Activated T-helper 2 cell treated with anti-CD3 and anti-CD28 coated beads, Interferon-gamma antibody, Interleukin-2, Interleukin-4, amounts not matched to agents 10 μg/mL and 5 μg/mL and 100 μg/mL, durations not matched to agents 14 hours and 24 hours and 36 hours (primary cell): ENCODE measurements at regions of chr3 and their contacts with region 1.

Region 1: GRCh38 chr3:185937689-185938463 is at the start of gene TRA2B:
- DNase-seq: peak; percentile 98
- H3K4me3 Mint-ChIP-seq: peak within 1 kb of the TSS; percentile 98
- H3K27ac Mint-ChIP-seq: peak within 1 kb of the TSS; percentile 100
- H3K4me1 Mint-ChIP-seq: peaks cover 34% of the 10 kb centered on the region
- H3K27me3 Mint-ChIP-seq: peaks cover 13% of the 10 kb centered on the region
- total RNA-seq, gene TRA2B: 277 and 282 TPM in 2 replicates

Region 2: DNA sequence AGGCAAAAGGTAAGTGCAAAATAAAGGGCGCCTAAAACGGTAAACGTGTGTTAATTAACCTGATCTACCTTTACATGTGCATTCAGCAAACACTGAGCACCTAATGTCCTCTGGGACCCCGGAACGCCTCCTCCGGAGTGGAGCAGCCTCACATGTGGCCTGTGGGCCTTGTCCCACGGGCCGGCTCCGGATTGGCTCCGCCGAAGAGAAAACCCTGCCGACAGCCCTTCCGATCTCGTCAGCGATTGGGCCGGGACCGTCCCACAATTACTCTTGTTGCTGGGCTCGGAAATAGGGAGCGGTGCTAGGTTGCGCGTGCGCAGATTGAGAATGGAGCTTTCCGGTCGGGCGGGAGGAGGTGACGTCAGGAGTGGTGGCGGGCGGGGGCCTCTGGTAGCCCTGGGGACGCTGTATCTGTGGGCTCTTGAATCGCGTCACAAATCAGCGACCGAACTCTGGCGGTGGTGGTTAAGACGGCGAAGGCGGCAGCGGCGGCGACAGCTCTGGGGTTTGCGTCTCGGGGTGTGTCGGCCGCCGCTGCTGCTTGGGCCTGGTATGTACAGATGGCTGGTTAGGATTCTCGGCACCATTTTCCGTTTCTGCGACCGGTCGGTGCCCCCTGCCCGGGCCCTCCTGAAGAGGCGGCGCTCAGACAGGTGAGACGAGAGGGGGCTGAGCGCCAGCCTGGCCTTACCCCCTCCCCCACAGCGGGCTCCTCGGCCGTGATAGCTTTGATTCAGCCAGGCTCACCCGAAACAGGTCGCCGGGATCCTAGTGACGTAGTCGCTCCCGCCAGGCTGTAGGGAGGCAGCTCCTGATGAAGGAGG is 351.8 kb before region 1 on chr3 and contains the start of gene SENP2:
- intact Hi-C with region 1: loop called (anchors 5 kb)
- DNase-seq: peak; percentile 100
- H3K4me3 Mint-ChIP-seq: peak within 1 kb of the TSS; percentile 82
- H3K27ac Mint-ChIP-seq: peak within 1 kb of the TSS; percentile 87
- H3K4me1 Mint-ChIP-seq: peaks cover 17% of the 10 kb centered on the region
- H3K27me3 Mint-ChIP-seq: no peaks in the 10 kb centered on the region
- total RNA-seq, gene SENP2: 31.5 and 34.2 TPM in 2 replicates

Region 3: DNA sequence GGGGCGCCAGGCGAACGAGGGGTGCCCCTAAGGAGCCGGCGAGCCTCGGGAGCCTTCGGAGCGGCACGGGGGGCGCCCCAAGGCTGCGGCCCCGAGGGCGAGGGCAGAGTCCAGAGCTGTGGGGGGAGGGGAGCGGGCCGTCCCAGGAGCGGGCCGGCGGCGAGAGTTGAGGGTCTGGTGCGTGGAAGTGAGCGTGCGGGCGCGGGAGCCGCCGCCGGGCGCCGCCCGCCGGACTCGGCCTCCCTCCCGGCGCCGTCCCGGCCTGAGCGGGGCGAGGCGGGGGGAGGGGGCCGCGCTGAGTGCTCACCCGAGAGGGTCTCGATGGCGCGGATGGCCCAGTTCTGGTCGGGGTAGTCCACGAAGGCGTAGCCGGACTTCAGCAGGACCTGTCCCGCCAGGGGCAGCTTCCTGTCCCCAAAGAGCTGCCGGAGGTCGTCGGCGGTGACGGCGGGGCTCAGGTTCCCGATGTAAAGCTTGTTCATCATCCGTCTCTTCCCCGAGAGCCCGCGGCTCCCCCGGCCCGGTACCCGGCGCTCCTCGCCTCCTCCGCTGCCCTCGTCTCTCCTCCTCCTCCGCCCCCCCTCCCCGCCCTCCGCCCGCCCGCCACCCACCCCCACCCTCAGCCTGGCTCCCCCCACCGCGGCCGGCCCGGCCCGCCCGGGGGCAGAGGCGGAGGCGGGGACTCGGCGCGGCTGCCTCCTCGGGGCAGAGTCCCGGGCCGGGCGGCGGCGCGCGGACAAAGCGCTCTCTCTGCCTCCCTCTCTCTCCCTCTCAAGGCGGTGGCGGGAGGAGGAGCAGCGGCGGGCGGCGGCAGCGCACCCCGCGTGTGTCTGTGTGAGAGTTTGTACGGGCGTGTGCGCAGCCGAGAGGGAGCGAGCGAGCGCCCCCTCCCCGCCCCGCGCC is 113.1 kb before region 1 on chr3 and contains the start of gene IGF2BP2:
- intact Hi-C with region 1: loop called (anchors 10 kb)
- DNase-seq: peak; percentile 46
- H3K4me3 Mint-ChIP-seq: peak within 1 kb of the TSS; percentile 75
- H3K27ac Mint-ChIP-seq: no peak within 1 kb of the TSS
- H3K4me1 Mint-ChIP-seq: peaks cover 10% of the 10 kb centered on the region
- H3K27me3 Mint-ChIP-seq: peaks cover 76% of the 10 kb centered on the region
- total RNA-seq, gene IGF2BP2: 0.05 and 1.6 TPM in 2 replicates

Region 4: GRCh38 chr3:186570096-186570940 is 632.4 kb after region 1 on chr3 and contains the start of gene DNAJB11:
- intact Hi-C with region 1: loop called (anchors 1 kb)
- DNase-seq: peak; percentile 98
- H3K4me3 Mint-ChIP-seq: peak within 1 kb of the TSS; percentile 89
- H3K27ac Mint-ChIP-seq: peak within 1 kb of the TSS; percentile 98
- H3K4me1 Mint-ChIP-seq: peaks cover 42% of the 10 kb centered on the region
- H3K27me3 Mint-ChIP-seq: no peaks in the 10 kb centered on the region
- total RNA-seq, gene DNAJB11: 66.3 and 72.8 TPM in 2 replicates